Tibial artery (tissue), 4 donors: ENCODE measurements at regions of chr14 and their contacts with region 1.

Region 1: GRCh38 chr14:21287168-21287567 is 7.3 kb downstream of the RPGRIP1 start:
- DNase-seq: no peak
- H3K4me3 ChIP-seq: no peak overlapping the region
- H3K27ac ChIP-seq: no peak overlapping the region
- H3K4me1 ChIP-seq: no peaks in the 10 kb centered on the region
- H3K27me3 ChIP-seq: no peaks in the 10 kb centered on the region
- CTCF ChIP-seq: no peak

Region 2: DNA sequence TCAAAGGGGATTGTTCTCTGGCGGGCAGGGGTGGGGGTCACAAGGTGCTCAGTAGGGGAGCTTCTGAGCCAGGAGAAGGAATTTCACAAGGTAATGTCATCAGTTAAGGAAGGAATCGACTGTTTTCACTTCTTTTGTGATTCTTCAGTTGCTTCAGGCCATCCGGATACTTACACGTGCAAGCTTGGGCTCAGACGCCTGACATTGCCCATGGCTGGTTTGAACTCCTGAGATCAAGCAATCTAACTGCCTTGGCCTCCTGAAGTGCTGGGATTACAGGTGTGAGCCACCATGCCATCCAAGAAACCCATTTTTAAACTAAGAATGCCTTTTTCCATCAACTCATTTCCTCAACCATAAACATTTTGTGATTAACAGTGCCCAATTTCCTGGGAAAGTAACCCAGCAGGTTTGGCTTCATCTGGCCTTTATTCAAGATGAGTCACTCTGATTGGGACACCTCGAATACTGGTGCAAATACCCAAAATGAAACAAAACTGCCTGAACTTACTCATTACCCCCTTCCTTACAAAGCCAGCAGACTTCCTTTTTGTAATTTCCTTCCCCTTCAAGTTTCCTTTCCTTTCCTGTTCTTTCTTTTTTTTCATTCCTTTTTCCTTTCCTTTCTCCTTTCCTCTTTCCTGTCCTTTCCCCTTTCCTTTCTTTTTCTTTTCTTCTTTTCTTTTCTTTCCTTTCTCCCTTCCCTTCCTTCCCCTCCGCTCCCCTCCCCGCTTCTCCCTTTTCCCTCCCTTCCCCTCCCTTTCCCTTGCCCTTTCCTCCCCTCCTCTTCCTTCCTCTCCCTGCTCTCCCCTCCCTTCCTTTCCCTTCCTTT is 792.0 kb before region 1 on chr14:
- intact Hi-C with region 1: loop called (anchors 10 kb)
- DNase-seq: no peak
- H3K4me3 ChIP-seq: no peak overlapping the region
- H3K27ac ChIP-seq: no peak overlapping the region
- H3K4me1 ChIP-seq: no peaks in the 10 kb centered on the region
- H3K27me3 ChIP-seq: peaks cover 0 to 4% of the 10 kb centered on the region in 2 donors
- CTCF ChIP-seq: no peak